GM10248 (cell line): ENCODE measurements at regions of chr6 and their contacts with region 1.

Region 1: GRCh38 chr6:149209871-149210775 is 107.4 kb upstream of the TAB2 start:
- DNase-seq: no peak
- CTCF ChIP-seq: no peak

Region 2: GRCh38 chr6:148658701-148659100 is 551.4 kb before region 1 on chr6:
- CTCF ChIA-PET with region 1: no interaction called
- POLR2A ChIA-PET with region 1: no interaction called
- DNase-seq: no peak
- CTCF ChIP-seq: no peak

Region 3: DNA sequence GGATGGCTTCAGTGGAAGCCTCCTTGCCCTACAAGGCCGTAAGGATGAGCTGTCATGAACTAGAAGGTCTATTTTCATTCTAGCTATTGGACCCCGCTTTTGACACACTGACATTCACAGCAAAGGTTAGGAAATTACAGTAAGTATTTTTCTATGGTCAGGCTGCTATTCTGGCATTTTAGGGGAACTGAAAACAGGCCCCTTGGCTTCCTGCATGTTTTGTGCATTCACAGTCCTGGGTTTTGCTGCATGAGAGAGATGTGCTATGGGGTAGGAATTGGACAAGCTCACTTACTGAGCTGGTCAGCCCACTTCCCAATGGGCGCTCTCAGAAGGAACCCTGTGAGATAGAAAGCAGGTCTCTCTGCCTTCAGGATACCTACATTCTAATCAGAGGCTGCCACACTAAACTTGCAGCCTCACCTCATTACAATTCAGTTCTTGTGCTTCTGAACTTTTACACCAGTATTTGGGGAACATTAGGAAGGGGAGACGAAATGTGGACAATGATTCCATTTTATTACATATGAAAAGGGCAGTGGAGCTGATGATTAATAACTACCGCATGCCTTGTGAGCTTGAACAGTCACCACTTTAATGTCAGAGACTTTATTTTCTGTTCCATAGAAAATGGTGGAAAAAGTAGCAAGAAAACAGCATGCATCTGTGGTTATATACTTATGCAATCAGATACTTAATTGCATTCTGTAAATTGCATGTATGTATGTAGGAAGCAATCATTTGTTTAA is 20.8 kb after region 1 on chr6:
- CTCF ChIA-PET with region 1: interaction called, 11 read pairs
- POLR2A ChIA-PET with region 1: no interaction called
- DNase-seq: no peak
- CTCF ChIP-seq: no peak

Region 4: DNA sequence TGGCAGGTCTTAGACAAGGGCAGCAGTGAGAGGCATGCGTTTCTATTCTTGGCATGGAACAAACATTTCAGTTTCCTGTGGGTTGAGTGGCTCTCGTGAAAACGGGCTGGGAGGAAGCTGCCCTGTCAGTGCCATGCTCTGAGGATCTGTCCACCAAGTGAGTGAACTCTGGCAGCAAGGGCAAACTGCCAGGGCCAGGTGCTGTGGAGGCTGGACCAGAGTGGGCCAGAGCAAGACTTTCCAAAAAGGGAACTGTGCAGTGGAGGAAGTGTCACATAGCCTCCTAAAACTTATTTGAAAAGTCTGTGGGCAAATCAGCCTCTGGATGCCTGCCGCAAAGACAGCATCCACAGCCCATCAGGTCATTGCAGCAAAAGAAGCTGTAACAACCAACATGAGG is 63.2 kb after region 1 on chr6:
- CTCF ChIA-PET with region 1: no interaction called
- POLR2A ChIA-PET with region 1: no interaction called
- DNase-seq: no peak
- CTCF ChIP-seq: no peak